Naive thymus-derived CD8-positive, alpha-beta T cell (primary cell): ENCODE measurements at regions of chr6 and their contacts with region 1.

Region 1: GRCh38 chr6:30326526-30327260 is at the start of gene TRIM39:
- DNase-seq: peak; percentile 82 to 94 (median 92)
- ATAC-seq: peak; percentile 68 to 72
- H3K4me3 Mint-ChIP-seq: peak within 1 kb of the TSS; percentile 87 to 99 (median 98)
- H3K27ac Mint-ChIP-seq: peak within 1 kb of the TSS; percentile 93 to 100 (median 99)
- H3K4me1 Mint-ChIP-seq: peaks cover 38 to 64% (median 56%) of the 10 kb centered on the region in 4 donors
- H3K27me3 Mint-ChIP-seq: no peaks in the 10 kb centered on the region
- polyA plus RNA-seq, gene TRIM39: 6.6 to 15.4 (median 12.7) TPM

Region 2: GRCh38 chr6:30061092-30061857 is 265.4 kb before region 1 on chr6 and contains the start of gene POLR1H:
- POLR2A ChIA-PET with region 1: interaction called, 20 read pairs
- DNase-seq: peak; percentile 70 to 93 (median 85)
- ATAC-seq: peak; percentile 87 to 93
- H3K4me3 Mint-ChIP-seq: peak within 1 kb of the TSS; percentile 87 to 100 (median 99)
- H3K27ac Mint-ChIP-seq: peak within 1 kb of the TSS; percentile 97 to 100 (median 99)
- H3K4me1 Mint-ChIP-seq: peaks cover 17 to 54% (median 34%) of the 10 kb centered on the region in 4 donors
- H3K27me3 Mint-ChIP-seq: no peaks in the 10 kb centered on the region
- polyA plus RNA-seq, gene POLR1H: 60.8 to 110 (median 93.5) TPM

Region 3: GRCh38 chr6:30066577-30067459 is 259.9 kb before region 1 on chr6 and contains the start of gene PPP1R11:
- POLR2A ChIA-PET with region 1: interaction called, 20 read pairs
- DNase-seq: peak; percentile 94 to 99 (median 98)
- ATAC-seq: peak; percentile 95 to 96
- H3K4me3 Mint-ChIP-seq: peak within 1 kb of the TSS; percentile 86 to 99 (median 98)
- H3K27ac Mint-ChIP-seq: peak within 1 kb of the TSS; percentile 97 to 100 (median 99)
- H3K4me1 Mint-ChIP-seq: peaks cover 36 to 75% (median 59%) of the 10 kb centered on the region in 4 donors
- H3K27me3 Mint-ChIP-seq: peaks cover 6 to 22% (median 14%) of the 10 kb centered on the region in 5 donors
- polyA plus RNA-seq, gene PPP1R11: 97.6 to 108 (median 101) TPM

Region 4: GRCh38 chr6:30212865-30213666 is 113.6 kb before region 1 on chr6 and contains the start of gene TRIM26:
- POLR2A ChIA-PET with region 1: interaction called, 36 read pairs
- DNase-seq: peak; percentile 88 to 99 (median 97)
- ATAC-seq: peak; percentile 88 to 89
- H3K4me3 Mint-ChIP-seq: peak within 1 kb of the TSS; percentile 92 to 100 (median 96)
- H3K27ac Mint-ChIP-seq: peak within 1 kb of the TSS; percentile 93 to 100 (median 99)
- H3K4me1 Mint-ChIP-seq: peaks cover 39 to 62% (median 59%) of the 10 kb centered on the region in 4 donors
- H3K27me3 Mint-ChIP-seq: no peaks in the 10 kb centered on the region
- polyA plus RNA-seq, gene TRIM26: 22.7 to 42.9 (median 27.6) TPM

Region 5: DNA sequence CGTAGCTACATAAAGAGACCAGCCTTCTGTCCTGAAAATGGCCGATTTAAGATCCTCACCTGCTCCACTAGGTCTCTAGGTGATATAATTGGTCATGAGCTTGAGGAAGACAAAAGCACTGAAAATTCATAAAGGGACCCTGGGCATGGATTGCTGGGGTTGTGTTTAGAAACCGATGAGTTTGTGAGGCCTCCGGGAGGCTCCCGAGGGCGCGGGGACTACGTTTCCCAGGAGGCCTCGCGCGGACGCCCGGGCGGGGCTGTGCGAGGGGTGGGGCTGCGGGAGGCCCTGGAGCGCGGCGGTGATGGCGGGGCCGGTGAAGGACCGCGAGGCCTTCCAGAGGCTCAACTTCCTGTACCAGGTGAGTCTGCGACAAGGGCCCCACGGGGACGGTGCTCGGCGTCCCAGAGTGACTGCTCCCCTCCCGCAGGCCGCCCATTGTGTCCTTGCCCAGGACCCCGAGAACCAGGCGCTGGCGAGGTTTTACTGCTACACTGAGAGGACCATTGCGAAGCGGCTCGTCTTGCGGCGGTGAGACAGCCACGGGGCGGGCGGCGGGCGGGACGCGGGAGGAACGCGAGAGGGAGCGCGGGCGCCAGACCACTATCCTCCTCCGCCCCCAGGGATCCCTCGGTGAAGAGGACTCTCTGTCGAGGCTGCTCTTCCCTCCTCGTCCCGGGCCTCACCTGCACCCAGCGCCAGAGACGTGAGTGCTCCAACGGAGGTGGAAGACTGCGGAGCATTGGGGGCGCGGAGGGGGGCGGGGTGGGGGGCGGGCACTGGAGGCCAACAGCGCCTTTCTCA is 18.4 kb after region 1 on chr6 and contains the start of gene RPP21:
- POLR2A ChIA-PET with region 1: interaction called, 18 read pairs
- DNase-seq: peak; percentile 76 to 91 (median 85)
- ATAC-seq: peak; percentile 97 to 98
- H3K4me3 Mint-ChIP-seq: peak within 1 kb of the TSS; percentile 81 to 97 (median 90)
- H3K27ac Mint-ChIP-seq: peak within 1 kb of the TSS; percentile 85 to 98 (median 96)
- H3K4me1 Mint-ChIP-seq: peaks cover 8 to 36% (median 26%) of the 10 kb centered on the region in 4 donors
- H3K27me3 Mint-ChIP-seq: no peaks in the 10 kb centered on the region
- polyA plus RNA-seq, gene RPP21: 61.1 to 92.4 (median 73.6) TPM